Heart right ventricle (tissue), 16 donors: ENCODE measurements at regions of chr6 and their contacts with region 1.

Region 1: DNA sequence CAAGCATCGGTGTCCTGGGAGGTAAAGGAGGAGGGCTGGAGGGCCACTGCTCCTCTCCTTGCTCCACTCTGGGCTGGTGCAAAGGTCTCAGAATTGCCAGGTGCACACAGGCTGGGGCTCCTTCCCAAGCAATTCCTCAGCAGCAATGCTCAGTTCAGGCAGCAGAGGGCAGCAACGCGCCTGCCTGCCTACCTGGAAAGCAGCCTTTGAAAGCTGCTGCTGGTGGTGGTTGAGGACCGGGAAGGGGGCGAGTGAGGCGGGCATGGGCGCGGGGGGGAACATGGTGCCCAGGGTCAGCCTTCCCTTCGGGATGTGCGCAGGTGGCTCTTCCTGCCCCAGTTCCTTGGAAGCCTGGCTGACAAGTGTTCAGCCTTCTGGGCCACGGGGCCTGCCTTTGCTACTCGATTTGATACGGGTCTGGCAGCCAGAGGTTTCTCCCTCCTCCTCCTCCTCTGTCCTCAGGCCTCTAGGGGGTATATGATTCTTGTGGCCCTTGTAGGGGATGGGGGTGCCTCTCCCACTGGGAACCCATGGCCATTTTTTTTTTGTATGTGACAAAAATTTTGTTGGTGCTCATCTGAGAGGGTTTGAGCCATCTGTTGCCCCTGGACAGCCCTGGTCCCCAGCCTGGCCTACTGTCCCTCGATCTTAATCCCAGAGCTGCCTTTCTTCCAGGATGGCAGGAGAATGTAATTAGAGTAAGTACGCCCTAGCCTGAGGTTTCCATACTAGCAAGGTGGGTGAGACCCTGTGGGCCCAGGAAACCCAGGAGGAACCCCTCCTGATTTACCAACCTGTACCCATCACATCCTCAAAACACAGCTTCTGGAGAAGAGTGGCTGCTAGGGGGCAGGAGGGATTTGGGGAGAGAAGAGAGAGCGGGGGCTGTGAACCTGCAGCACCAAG is 20.1 kb downstream of the MRPS18A start:
- DNase-seq: peak; percentile 83 to 85
- ATAC-seq: peak; percentile 49 to 75 (median 59)
- H3K4me3 ChIP-seq: peak overlapping the region in 3 of 10 donors; percentile 15 to 24 (median 22)
- H3K27ac ChIP-seq: peak overlapping the region in 8 of 10 donors; percentile 19 to 85 (median 80)
- H3K4me1 ChIP-seq: peaks cover 26 to 47% (median 41%) of the 10 kb centered on the region in 9 donors
- H3K27me3 ChIP-seq: no peaks in the 10 kb centered on the region
- CTCF ChIP-seq: peak; percentile 85 to 98 (median 95)

Region 2: DNA sequence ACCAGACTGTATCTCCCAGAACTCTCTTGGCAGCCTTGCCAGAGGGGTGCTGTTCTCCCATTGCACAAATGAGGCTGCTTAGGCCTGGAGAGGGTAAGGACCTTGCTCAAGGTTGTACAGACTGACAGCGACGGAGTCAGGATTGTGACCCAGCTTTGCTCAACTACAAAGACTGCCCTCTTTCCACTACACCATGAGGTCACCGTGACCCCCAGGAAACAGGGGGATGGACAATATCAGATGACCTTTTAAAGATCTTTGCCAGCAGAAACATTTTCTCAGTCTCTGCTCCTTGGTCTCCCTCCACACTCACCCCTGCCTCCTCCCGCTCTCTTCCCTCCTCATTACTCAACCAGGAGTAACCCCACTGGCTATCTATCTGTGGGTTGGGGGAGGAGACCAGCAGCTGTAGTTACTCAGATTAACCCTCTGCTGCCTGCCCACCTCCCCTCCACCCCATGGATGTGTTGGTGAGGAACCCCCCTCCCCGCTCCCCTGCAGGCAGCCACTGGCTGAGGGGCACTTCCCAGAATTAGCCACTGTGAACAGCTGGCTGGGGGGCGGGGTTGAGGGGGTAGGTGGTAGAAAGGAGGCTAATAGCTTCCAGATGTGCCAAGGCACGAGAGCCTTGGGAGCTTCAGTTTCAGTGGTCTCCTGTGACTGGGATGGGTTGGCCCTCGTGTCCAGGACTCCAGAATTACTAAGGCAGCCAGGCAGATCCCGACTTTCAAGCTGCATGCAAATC is 47.0 kb after region 1 on chr6:
- intact Hi-C with region 1: loop called in 1 of 10 experiments (anchors 5 kb)
- DNase-seq: peak in 1 of 2 donors; percentile 37
- ATAC-seq: peak in 2 of 8 donors; percentile 12 to 34
- H3K4me3 ChIP-seq: no peak overlapping the region
- H3K27ac ChIP-seq: peak overlapping the region in 5 of 10 donors; percentile 10 to 54 (median 27)
- H3K4me1 ChIP-seq: peaks cover 4 to 67% (median 41%) of the 10 kb centered on the region in 9 donors
- H3K27me3 ChIP-seq: no peaks in the 10 kb centered on the region
- CTCF ChIP-seq: no peak

Region 3: GRCh38 chr6:43723737-43724295 is 56.3 kb after region 1 on chr6:
- intact Hi-C with region 1: loop called in 3 of 10 experiments (anchors 5 kb)
- DNase-seq: peak; percentile 60 to 65
- ATAC-seq: peak; percentile 71 to 87 (median 78)
- H3K4me3 ChIP-seq: no peak overlapping the region
- H3K27ac ChIP-seq: peak overlapping the region in 1 of 10 donors; percentile 26
- H3K4me1 ChIP-seq: peaks cover 0 to 28% (median 9%) of the 10 kb centered on the region in 9 donors
- H3K27me3 ChIP-seq: no peaks in the 10 kb centered on the region
- CTCF ChIP-seq: peak; percentile 41 to 77 (median 68)

Region 4: DNA sequence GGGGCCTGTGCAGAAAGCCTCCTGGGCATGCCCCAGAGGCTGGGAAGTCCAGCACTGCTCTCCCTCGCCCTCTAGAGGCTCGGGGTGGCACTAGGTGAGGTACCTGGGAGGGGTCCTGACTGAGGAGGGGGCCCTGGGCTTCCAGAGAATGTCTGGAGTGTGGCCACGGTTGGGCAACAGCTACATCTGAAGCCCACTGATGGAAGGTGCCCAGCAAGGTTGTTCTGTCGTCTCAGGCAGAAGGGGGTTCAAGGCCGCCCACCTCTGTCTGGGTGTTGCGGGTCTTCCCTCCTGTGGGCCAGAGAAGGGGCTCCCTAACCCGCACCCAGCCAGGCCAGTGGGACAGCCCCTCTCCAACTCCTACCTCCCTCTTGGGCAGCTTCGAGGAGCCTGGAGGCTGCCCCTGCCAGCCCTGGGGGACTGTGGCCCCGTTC is 91.1 kb after region 1 on chr6:
- intact Hi-C with region 1: loop called in 8 of 10 experiments (anchors 2 to 5 kb)
- DNase-seq: no peak
- ATAC-seq: peak; percentile 39 to 75 (median 66)
- H3K4me3 ChIP-seq: no peak overlapping the region
- H3K27ac ChIP-seq: no peak overlapping the region
- H3K4me1 ChIP-seq: peaks cover 0 to 7% (median 0%) of the 10 kb centered on the region in 9 donors
- H3K27me3 ChIP-seq: no peaks in the 10 kb centered on the region
- CTCF ChIP-seq: peak; percentile 56 to 80 (median 72)

Region 5: GRCh38 chr6:43838276-43839036 is 171.0 kb after region 1 on chr6:
- intact Hi-C with region 1: loop called in 2 of 10 experiments (anchors 5 to 10 kb)
- DNase-seq: peak; percentile 18 to 40
- ATAC-seq: peak; percentile 34 to 86 (median 72)
- H3K4me3 ChIP-seq: no peak overlapping the region
- H3K27ac ChIP-seq: peak overlapping the region in 6 of 10 donors; percentile 12 to 67 (median 46)
- H3K4me1 ChIP-seq: peaks cover 0 to 16% (median 10%) of the 10 kb centered on the region in 9 donors
- H3K27me3 ChIP-seq: no peaks in the 10 kb centered on the region
- CTCF ChIP-seq: peak in 8 of 9 donors; percentile 40 to 64 (median 56)

Region 6: GRCh38 chr6:43856005-43856765 is 188.7 kb after region 1 on chr6:
- intact Hi-C with region 1: no loop called
- DNase-seq: peak in 1 of 2 donors; percentile 30
- ATAC-seq: peak in 7 of 8 donors; percentile 41 to 69 (median 54)
- H3K4me3 ChIP-seq: no peak overlapping the region
- H3K27ac ChIP-seq: peak overlapping the region in 1 of 10 donors; percentile 22
- H3K4me1 ChIP-seq: no peaks in the 10 kb centered on the region
- H3K27me3 ChIP-seq: no peaks in the 10 kb centered on the region
- CTCF ChIP-seq: peak in 8 of 9 donors; percentile 19 to 58 (median 46)